Activated CD4-positive, alpha-beta T cell treated with anti-CD3 and anti-CD28 coated beads for 36 hours (primary cell): ENCODE measurements at regions of chr15 and their contacts with region 1.

Region 1: GRCh38 chr15:89378296-89379151 is 43.9 kb upstream of the POLG start:
- DNase-seq: peak; percentile 22
- ATAC-seq: no peak
- H3K4me3 Mint-ChIP-seq: peak overlapping the region; percentile 44
- H3K27ac Mint-ChIP-seq: no peak overlapping the region
- H3K4me1 Mint-ChIP-seq: peaks cover 7% of the 10 kb centered on the region
- H3K27me3 Mint-ChIP-seq: peaks cover 73% of the 10 kb centered on the region

Region 2: GRCh38 chr15:89325039-89325803 is 53.3 kb before region 1 on chr15:
- CTCF ChIA-PET with region 1: no interaction called
- POLR2A ChIA-PET with region 1: no interaction called
- intact Hi-C with region 1: no loop called
- DNase-seq: no peak
- ATAC-seq: no peak
- H3K4me3 Mint-ChIP-seq: no peak overlapping the region
- H3K27ac Mint-ChIP-seq: no peak overlapping the region
- H3K4me1 Mint-ChIP-seq: peaks cover 19% of the 10 kb centered on the region
- H3K27me3 Mint-ChIP-seq: no peaks in the 10 kb centered on the region

Region 3: GRCh38 chr15:89399238-89400120 is 21.0 kb after region 1 on chr15:
- CTCF ChIA-PET with region 1: interaction called, 4 read pairs
- POLR2A ChIA-PET with region 1: interaction called, 3 read pairs
- intact Hi-C with region 1: loop called in 1 of 2 experiments (anchors 2 kb)
- DNase-seq: peak; percentile 61
- ATAC-seq: peak; percentile 77
- H3K4me3 Mint-ChIP-seq: peak overlapping the region; percentile 56
- H3K27ac Mint-ChIP-seq: peak overlapping the region; percentile 63
- H3K4me1 Mint-ChIP-seq: peaks cover 11% of the 10 kb centered on the region
- H3K27me3 Mint-ChIP-seq: peaks cover 56% of the 10 kb centered on the region